CD8-positive, alpha-beta memory T cell (primary cell): ENCODE measurements at regions of chr3 and their contacts with region 1.

Region 1: DNA sequence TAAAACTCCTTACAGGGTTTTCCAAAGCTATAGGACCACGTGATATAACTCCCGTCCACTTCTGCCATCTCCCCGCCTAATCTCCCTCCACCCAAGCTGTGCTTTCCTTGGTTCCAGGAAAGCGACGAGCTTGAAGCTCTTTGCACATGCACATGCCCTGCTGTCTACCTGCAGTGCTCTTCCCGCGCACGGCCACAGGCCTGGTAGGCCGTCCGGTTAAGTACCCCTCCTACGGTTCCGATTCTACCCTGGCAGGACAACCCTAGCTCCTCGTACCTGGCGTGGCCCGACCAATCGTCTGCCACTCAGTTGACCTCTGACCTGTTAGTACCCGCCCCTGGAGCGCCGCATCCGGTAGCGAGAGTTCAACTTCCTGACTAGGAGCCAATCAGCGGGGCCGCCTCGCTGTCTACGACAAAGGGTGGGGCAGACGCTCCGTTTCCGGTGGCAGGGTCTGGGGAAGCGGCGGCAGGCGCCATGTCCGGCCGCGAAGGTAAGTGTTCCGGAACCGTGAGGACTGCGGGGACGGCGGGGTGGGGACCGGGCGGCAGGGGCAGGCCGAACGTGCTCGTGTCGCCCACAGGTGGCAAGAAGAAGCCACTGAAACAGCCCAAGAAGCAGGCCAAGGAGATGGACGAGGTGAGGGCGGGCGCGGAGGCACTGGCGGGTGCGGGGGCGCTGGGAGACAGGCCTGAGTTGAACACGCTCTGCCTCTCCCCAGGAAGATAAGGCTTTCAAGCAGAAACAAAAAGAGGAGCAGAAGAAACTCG is at the starts of genes CCDC51 and TMA7:
- DNase-seq: peak; percentile 96 to 99 (median 97)
- H3K4me3 ChIP-seq: peak within 1 kb of the TSS; percentile 62
- H3K4me3 Mint-ChIP-seq: peak within 1 kb of the TSS; percentile 84 to 99 (median 93)
- H3K27ac ChIP-seq: peak within 1 kb of the TSS; percentile 96
- H3K27ac Mint-ChIP-seq: peak within 1 kb of the TSS in 6 of 8 donors; percentile 96 to 100 (median 100)
- H3K4me1 ChIP-seq: peaks cover 36% of the 10 kb centered on the region
- H3K4me1 Mint-ChIP-seq: peaks cover 28 to 46% (median 31%) of the 10 kb centered on the region in 3 donors
- H3K27me3 ChIP-seq: no peaks in the 10 kb centered on the region
- H3K27me3 Mint-ChIP-seq: no peaks in the 10 kb centered on the region
- total RNA-seq, gene CCDC51: 24.2 to 26.0 TPM
- total RNA-seq, gene TMA7: 420 to 494 TPM

Region 2: DNA sequence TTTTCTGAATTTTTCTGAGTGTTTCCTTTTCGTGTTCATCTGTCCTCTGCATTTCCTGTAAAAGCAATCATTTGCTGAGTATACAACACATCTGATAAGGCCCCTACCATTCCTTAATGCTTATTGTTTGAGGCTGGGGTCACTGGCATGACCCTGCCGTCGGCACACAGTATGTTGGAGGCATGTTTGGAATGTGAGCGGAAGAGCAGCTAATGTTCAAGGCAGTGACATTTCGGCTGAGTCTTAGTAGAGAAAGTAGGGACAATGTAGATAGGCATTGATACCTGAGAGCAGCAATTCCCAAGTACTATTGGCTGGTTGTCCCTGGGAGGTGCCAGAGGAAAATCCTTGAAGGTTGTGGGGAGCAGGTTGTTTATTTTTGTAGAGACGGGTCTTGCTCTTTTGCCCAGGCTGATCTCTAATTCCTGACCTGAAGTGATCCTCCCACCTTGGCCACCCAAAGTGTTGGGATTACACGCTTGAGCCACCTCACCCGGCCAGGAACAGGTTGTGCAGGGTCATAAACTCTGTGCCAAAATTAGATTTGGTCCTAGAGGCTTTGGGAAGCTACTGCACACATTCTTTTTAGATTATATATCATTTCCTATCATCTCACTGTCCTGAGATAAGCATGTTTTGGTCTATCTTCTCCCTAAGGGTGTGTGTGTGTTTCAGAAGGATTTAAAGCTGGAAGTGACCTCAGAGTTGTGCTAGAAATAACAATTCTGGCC is 1045.7 kb before region 1 on chr3:
- CTCF ChIA-PET with region 1: no interaction called
- POLR2A ChIA-PET with region 1: no interaction called
- DNase-seq: no peak
- H3K4me3 ChIP-seq: no peak overlapping the region
- H3K4me3 Mint-ChIP-seq: no peak overlapping the region
- H3K27ac ChIP-seq: no peak overlapping the region
- H3K27ac Mint-ChIP-seq: peak overlapping the region in 7 of 8 donors; percentile 58 to 92 (median 63)
- H3K4me1 ChIP-seq: peaks cover 8% of the 10 kb centered on the region
- H3K4me1 Mint-ChIP-seq: peaks cover 24 to 55% (median 41%) of the 10 kb centered on the region in 3 donors
- H3K27me3 ChIP-seq: no peaks in the 10 kb centered on the region
- H3K27me3 Mint-ChIP-seq: no peaks in the 10 kb centered on the region

Region 3: DNA sequence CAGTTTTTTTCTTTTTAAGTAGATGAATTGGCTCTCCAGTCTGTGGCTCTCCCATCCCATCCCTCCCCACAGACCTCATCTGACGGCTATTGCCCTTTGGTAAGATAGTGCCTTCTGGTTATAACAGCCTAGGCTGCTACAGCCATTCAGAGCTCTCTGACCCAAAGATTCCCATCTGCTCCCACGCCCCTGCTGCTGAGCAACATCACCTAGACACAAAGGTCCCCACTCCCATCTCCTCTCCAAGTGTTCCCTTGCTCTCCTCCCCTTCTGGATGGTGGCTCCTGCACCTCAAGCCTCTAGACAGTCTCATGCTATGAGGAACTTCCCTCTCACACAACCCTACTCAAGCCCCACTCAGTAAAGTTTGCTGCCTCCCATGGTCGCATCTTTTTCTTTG is 44.3 kb before region 1 on chr3:
- CTCF ChIA-PET with region 1: interaction called, 176 read pairs
- POLR2A ChIA-PET with region 1: interaction called, 11 read pairs
- DNase-seq: no peak
- H3K4me3 ChIP-seq: no peak overlapping the region
- H3K4me3 Mint-ChIP-seq: no peak overlapping the region
- H3K27ac ChIP-seq: no peak overlapping the region
- H3K27ac Mint-ChIP-seq: no peak overlapping the region
- H3K4me1 ChIP-seq: no peaks in the 10 kb centered on the region
- H3K4me1 Mint-ChIP-seq: no peaks in the 10 kb centered on the region
- H3K27me3 ChIP-seq: no peaks in the 10 kb centered on the region
- H3K27me3 Mint-ChIP-seq: peaks cover 6 to 46% of the 10 kb centered on the region in 2 donors

Region 4: DNA sequence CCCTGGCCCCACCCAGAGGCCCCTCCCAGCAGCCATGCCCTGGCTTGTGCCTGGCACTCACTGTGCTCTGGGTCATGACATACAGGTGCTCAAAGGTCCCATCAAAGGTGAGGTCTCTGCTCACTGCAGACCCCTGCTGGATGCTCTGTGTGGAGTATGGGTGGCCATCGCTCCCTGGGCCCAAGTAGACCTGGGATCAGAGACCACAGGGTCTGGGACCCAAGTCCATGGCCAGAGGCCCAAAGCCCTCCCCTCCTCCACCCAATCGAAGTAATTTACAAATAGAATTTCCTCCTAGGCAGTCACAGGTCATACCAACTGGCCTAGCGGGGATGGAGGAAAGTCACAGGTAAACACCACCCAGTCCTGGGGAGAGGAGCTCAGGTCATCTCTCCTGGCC is 17.7 kb before region 1 on chr3:
- CTCF ChIA-PET with region 1: interaction called, 24 read pairs
- POLR2A ChIA-PET with region 1: no interaction called
- DNase-seq: no peak
- H3K4me3 ChIP-seq: no peak overlapping the region
- H3K4me3 Mint-ChIP-seq: no peak overlapping the region
- H3K27ac ChIP-seq: no peak overlapping the region
- H3K27ac Mint-ChIP-seq: no peak overlapping the region
- H3K4me1 ChIP-seq: no peaks in the 10 kb centered on the region
- H3K4me1 Mint-ChIP-seq: no peaks in the 10 kb centered on the region
- H3K27me3 ChIP-seq: no peaks in the 10 kb centered on the region
- H3K27me3 Mint-ChIP-seq: peaks cover 0 to 1% of the 10 kb centered on the region in 2 donors

Region 5: DNA sequence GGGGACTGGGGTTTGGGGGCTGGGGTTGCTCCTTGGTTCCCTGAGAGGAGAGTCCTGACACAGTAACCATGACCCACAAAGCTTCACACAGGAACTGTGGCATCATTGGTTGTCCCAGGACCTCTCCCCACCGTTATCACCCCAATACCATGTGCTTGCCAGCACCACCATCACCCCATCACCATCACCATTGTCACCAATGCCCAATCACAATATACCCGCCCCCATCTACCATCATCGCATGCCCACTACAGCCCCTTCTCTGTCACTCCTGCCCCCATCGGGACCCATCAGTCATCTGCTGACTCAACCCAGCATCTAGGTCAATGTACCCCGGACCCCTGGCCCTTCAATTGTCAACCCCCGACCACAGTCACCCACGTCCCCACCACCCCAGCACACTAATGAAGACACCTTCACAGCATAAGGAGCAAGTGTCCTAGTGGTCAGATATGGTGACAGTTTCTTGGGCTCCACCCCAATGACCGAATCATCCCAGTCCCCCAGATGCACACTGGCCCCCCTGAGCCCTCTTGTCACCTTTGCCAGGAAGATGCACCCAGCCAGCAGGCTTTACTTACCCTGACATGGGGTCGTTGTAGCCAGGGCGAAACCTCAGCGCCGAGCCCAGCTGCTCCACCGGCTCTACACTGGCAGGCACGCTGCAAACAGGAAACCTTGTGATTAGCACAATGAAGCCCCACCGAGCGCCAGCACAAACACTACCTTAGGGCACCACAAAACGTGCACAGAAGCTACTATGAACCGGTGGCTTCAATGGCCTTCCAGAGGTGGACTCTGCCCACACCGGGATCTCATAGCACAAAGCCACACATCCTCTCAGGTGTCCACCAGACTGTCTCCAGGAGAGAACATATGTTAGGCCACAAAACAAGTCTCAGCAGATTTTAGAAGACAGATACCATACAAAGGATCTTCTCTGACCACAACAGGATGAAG is 38.9 kb after region 1 on chr3:
- CTCF ChIA-PET with region 1: interaction called, 69 read pairs
- POLR2A ChIA-PET with region 1: interaction called, 18 read pairs
- DNase-seq: peak; percentile 42 to 87 (median 80)
- H3K4me3 ChIP-seq: peak overlapping the region; percentile 60
- H3K4me3 Mint-ChIP-seq: peak overlapping the region; percentile 86 to 98 (median 93)
- H3K27ac ChIP-seq: peak overlapping the region; percentile 78
- H3K27ac Mint-ChIP-seq: peak overlapping the region; percentile 93 to 99 (median 98)
- H3K4me1 ChIP-seq: peaks cover 30% of the 10 kb centered on the region
- H3K4me1 Mint-ChIP-seq: peaks cover 37 to 58% (median 41%) of the 10 kb centered on the region in 3 donors
- H3K27me3 ChIP-seq: no peaks in the 10 kb centered on the region
- H3K27me3 Mint-ChIP-seq: no peaks in the 10 kb centered on the region

Region 6: GRCh38 chr3:48514436-48515227 is 74.6 kb after region 1 on chr3:
- CTCF ChIA-PET with region 1: interaction called, 63 read pairs
- POLR2A ChIA-PET with region 1: interaction called, 4 read pairs
- DNase-seq: peak in 2 of 5 donors; percentile 52 to 58
- H3K4me3 ChIP-seq: peak overlapping the region; percentile 8
- H3K4me3 Mint-ChIP-seq: peak overlapping the region in 6 of 7 donors; percentile 62 to 75 (median 68)
- H3K27ac ChIP-seq: no peak overlapping the region
- H3K27ac Mint-ChIP-seq: peak overlapping the region in 7 of 8 donors; percentile 26 to 71 (median 68)
- H3K4me1 ChIP-seq: peaks cover 61% of the 10 kb centered on the region
- H3K4me1 Mint-ChIP-seq: peaks cover 54 to 69% (median 64%) of the 10 kb centered on the region in 3 donors
- H3K27me3 ChIP-seq: no peaks in the 10 kb centered on the region
- H3K27me3 Mint-ChIP-seq: peaks cover 0 to 6% of the 10 kb centered on the region in 2 donors